Calu3 (cell line): ENCODE measurements at regions of chr6 and their contacts with region 1.

Region 1: DNA sequence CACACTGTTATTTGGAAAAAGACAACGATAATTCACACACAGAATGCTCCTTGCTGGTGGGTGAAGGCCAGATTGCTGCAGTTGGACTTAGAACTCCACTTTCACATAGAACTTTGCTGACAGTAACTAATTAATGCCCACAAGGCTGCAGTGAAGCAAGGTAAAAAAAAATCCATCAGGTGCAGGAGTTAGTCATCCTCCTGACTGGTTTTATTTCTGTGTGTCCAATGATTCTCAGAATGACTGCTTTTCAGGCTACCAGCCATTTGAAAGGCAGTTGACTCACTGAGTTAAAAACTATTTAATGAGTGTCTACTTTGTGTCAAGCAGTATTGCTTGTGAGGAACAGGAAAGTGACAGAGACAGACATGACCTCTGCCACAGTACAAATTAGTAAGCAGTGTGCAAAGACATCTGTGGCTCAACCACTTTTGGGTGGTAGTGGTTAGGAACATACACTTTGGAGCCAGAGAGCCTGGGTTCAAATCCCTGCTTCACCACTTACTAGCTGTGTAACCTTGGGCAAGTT is 41.9 kb downstream of the ELOVL5 start:
- DNase-seq: peak; percentile 6
- H3K4me3 Mint-ChIP-seq: no peak overlapping the region
- H3K27ac Mint-ChIP-seq: no peak overlapping the region
- H3K4me1 Mint-ChIP-seq: peaks cover 32% of the 10 kb centered on the region
- H3K27me3 Mint-ChIP-seq: no peaks in the 10 kb centered on the region
- CTCF ChIP-seq: no peak

Region 2: DNA sequence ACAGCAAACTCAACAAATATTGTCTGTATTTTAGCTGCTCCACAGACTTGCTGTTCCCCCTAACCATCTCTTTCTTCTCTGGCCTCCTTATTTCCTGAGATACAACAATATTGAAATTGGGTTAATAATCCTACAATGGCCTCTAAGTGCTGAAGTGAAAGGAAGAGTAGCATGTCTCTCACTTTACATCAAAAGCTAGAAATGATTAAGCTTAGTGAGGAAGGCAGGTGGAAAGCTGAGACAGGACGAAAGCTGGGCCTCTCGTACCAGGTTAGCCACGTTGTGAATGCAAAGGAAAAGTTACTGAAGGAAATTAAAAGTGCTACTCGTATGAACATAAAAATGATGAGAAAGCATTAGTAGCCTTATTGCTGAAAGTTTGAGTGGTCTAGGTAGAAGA is 22.0 kb before region 1 on chr6:
- CTCF ChIA-PET with region 1: no interaction called
- intact Hi-C with region 1: no loop called
- DNase-seq: no peak
- H3K4me3 Mint-ChIP-seq: no peak overlapping the region
- H3K27ac Mint-ChIP-seq: no peak overlapping the region
- H3K4me1 Mint-ChIP-seq: no peaks in the 10 kb centered on the region
- H3K27me3 Mint-ChIP-seq: no peaks in the 10 kb centered on the region
- CTCF ChIP-seq: no peak

Region 3: DNA sequence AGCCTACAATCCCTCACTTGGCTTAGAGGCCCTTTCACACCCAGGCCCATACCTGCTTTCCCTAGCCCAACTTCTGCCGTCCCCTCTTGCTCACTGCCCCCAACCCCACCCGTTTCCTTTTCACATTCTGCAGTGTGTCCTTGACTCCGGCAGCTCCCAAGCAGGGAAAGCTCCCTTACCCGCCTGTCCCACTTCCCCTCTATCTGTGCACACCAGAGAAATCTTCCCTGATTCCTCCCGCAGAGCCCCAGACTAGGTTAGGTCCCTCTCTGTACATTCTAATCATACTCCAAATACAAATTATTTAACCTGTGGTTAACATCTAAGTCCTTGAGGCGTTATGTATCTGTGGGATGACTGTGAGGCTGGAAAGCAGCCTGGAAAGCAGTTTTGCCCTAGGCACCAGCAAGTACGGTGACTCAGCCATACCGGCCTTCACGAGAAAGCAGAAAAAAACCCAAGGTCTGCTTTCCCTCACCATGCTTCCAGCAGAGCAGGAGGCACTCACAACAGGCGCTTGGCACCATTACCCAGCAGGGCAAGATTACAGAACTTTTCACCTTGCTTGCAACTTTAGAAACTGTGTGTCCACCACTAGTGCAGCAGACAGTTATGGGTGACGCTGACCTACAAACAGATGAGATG is 19.6 kb after region 1 on chr6:
- CTCF ChIA-PET with region 1: no interaction called
- intact Hi-C with region 1: loop called (anchors 2 kb)
- DNase-seq: peak; percentile 41
- H3K4me3 Mint-ChIP-seq: peak overlapping the region; percentile 13
- H3K27ac Mint-ChIP-seq: no peak overlapping the region
- H3K4me1 Mint-ChIP-seq: peaks cover 32% of the 10 kb centered on the region
- H3K27me3 Mint-ChIP-seq: no peaks in the 10 kb centered on the region
- CTCF ChIP-seq: no peak

Region 4: DNA sequence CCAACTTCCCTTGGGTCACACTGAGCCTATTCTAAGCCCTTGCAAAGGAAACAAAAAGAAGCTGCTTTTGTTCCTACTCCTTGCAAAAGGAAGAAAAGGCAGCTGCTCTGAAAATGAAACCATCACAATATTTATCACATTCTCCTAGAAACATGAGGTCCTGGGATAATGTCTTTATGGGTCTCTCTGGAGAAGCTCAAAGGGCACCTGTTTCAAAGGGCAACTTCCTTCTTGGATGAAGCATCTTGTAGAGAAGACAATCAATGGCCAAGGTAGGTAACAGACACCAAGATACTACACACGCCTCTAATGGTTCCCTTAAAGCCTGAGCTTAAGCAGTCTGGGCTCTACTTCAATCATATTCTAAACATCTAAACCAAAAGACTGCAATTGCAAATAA is 31.4 kb after region 1 on chr6:
- CTCF ChIA-PET with region 1: no interaction called
- intact Hi-C with region 1: no loop called
- DNase-seq: no peak
- H3K4me3 Mint-ChIP-seq: no peak overlapping the region
- H3K27ac Mint-ChIP-seq: no peak overlapping the region
- H3K4me1 Mint-ChIP-seq: peaks cover 9% of the 10 kb centered on the region
- H3K27me3 Mint-ChIP-seq: no peaks in the 10 kb centered on the region
- CTCF ChIP-seq: no peak